Caco-2 (cell line): ENCODE measurements at regions of chr5 and their contacts with region 1.

Region 1: GRCh38 chr5:24633712-24634325 is 11.0 kb downstream of the CDH10 start:
- DNase-seq: peak in 1 of 2 experiments; percentile 38
- H3K4me3 ChIP-seq: no peak overlapping the region
- H3K4me3 Mint-ChIP-seq: no peak overlapping the region
- H3K27ac Mint-ChIP-seq: no peak overlapping the region
- H3K4me1 ChIP-seq: no peaks in the 10 kb centered on the region
- H3K4me1 Mint-ChIP-seq: no peaks in the 10 kb centered on the region
- H3K27me3 ChIP-seq: no peaks in the 10 kb centered on the region
- H3K27me3 Mint-ChIP-seq: no peaks in the 10 kb centered on the region
- CTCF ChIP-seq: peak in 1 of 2 experiments; percentile 47

Region 2: DNA sequence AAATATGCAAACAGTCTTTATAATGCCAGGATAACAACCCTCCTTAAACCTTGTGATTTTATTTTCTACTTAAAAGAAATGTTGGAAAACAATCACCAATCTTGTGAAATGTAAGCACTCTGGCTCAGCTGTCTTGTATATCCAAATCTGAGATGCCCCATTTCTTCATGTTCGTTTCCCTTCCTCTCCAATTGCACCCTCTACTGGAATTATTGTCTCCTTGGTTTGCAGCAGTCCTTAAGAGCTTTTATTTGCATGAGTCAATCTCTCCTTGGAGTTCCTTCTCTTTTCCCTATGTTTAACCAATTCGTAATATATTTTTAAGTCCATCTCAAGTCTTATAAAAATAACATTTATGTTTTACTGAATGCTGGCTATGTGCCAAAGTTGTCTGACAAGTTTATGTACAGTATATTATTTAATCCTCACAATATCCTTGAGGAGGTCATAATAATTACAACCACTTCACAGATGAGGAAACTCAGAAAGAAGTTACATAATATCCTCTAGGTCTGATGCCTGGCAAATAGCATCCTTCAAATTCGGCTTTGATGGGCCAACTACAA is 373.0 kb after region 1 on chr5:
- CTCF ChIA-PET with region 1: no interaction called
- POLR2A ChIA-PET with region 1: no interaction called
- intact Hi-C with region 1: loop called (anchors 5 kb)
- DNase-seq: peak in 1 of 2 experiments; percentile 3
- H3K4me3 ChIP-seq: no peak overlapping the region
- H3K4me3 Mint-ChIP-seq: no peak overlapping the region
- H3K27ac Mint-ChIP-seq: no peak overlapping the region
- H3K4me1 ChIP-seq: no peaks in the 10 kb centered on the region
- H3K4me1 Mint-ChIP-seq: no peaks in the 10 kb centered on the region
- H3K27me3 ChIP-seq: no peaks in the 10 kb centered on the region
- H3K27me3 Mint-ChIP-seq: no peaks in the 10 kb centered on the region
- CTCF ChIP-seq: peak in 1 of 2 experiments; percentile 1